ENCODE measurements at regions of chr10 and their contacts with region 1.

Region 1: GRCh38 chr10:122953827-122954730 is at the start of gene C10orf88:
- DNase-seq: peak; percentile 89 to 99 (median 97)
- ATAC-seq: peak; percentile 96
- H3K4me3 Mint-ChIP-seq: peak within 1 kb of the TSS; percentile 85 to 95 (median 93)
- H3K27ac Mint-ChIP-seq: peak within 1 kb of the TSS; percentile 84 to 98 (median 90)
- H3K4me1 Mint-ChIP-seq: peaks cover 19 to 38% (median 33%) of the 10 kb centered on the region in 4 donors
- H3K27me3 Mint-ChIP-seq: peaks cover 0 to 3% (median 0%) of the 10 kb centered on the region in 5 donors
- polyA plus RNA-seq, gene C10orf88: 6.0 to 8.8 (median 7.0) TPM

Region 2: DNA sequence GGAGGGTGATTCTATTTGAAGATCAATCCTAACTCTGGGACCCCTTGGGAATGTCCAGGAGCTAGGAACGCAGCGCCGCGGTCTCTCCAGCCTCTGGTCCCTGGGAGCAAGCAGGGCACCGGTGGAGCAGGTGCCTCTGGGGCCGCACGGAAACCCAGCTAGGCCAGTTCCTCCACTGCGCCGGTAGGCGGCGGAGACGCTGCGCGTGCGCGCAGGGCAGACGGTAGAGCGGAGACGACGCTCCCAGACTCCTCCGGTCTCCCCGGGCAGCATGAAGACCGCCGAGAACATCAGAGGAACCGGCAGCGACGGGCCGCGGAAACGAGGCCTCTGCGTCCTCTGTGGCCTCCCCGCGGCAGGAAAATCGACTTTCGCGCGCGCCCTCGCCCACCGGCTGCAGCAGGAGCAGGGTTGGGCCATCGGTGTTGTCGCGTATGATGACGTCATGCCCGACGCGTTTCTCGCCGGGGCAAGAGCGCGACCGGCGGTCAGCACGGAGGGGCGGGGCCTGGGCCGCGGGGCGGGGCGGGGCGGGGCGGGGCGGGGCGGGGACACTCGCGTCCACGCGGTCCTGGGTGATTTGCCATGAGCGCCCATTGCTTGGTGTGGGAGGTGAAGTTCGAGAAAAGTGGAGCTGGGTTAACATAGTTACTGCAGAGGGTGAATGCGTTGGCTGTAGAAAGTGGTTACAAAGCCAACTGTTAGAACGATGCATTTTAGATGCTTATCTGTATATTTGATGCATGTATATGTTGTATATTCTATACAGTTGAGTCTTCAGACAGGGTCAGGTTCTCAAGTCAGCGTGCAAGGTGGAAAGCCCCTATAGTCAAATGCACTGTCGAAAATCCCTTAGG is 26.4 kb after region 1 on chr10 and contains the start of gene PSTK:
- POLR2A ChIA-PET with region 1: interaction called, 23 read pairs
- DNase-seq: peak; percentile 75 to 97 (median 86)
- ATAC-seq: peak; percentile 97
- H3K4me3 Mint-ChIP-seq: peak within 1 kb of the TSS; percentile 89 to 95 (median 92)
- H3K27ac Mint-ChIP-seq: peak within 1 kb of the TSS; percentile 90 to 99 (median 98)
- H3K4me1 Mint-ChIP-seq: peaks cover 14 to 24% (median 19%) of the 10 kb centered on the region in 4 donors
- H3K27me3 Mint-ChIP-seq: no peaks in the 10 kb centered on the region
- polyA plus RNA-seq, gene PSTK: 8.8 to 11.7 (median 11.0) TPM

Measured in naive thymus-derived CD8-positive, alpha-beta T cell (primary cell).